Cardiac septum (tissue), 1 donor: ENCODE measurements at regions of chr14 and their contacts with region 1.

Region 1: DNA sequence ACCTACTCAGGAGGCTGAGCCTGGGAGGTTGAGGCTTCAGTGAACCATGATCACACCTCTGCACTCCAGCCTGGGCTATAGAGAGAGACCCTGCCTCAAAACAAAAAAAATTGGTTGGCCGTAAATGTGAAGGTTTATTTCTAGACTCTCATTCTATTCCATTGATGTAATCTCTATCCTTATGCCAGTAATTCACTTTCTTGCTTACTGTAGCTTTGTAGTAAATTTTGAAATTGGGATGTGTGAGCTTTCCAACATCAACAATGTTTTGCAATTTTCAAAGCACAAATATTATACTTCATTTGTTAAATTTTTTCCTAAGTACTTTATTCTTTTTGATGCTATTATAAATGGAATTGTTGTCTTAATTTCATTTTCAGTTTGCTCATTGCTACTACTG is 24.6 kb downstream of the LIN52 start:
- DNase-seq: no peak

Region 2: GRCh38 chr14:74223016-74223415 is 113.6 kb after region 1 on chr14:
- intact Hi-C with region 1: no loop called
- DNase-seq: no peak

Region 3: DNA sequence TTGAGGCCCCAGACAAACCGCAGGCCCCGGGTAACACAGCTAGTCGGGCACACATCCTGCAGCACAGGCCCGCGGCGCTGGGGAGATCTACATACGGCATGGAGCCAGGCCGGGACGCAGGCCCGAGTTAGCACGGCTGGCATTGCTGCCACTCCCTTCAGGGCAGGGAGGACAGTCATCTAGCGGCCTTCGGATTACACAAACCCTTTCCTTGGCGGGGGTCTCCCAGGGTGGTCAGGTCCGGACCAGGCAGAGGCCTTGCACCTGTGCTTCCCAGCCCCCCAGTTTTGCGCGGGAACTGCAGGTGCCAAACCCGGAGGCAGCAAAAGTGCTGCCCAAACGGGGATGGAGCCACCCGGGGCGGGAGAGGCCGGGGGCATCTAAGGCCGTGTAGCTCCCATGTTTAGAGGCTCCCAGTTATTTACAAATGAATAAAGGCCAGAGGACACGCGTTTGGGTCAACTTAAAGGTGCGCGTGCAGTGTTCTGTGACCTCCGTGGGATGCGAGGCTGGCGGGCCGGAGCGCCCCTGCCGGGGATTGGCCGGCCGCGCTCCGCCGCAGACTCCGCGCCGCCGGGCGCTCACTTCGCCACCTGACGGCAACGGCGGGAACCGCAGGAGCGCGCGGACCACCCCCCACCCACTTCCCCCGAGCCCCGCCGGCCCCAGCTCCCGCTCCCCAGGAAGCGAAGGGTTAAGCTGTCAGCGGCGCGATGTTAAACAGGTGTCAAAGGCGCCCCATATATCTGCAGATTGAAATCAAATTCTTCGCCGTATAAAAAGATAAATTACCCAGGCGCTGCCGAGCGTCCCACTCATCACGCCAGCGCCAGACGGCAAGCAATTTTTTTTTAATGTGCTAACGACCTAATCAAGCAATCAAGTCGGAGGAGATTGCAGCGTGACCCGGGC is 148.0 kb after region 1 on chr14:
- intact Hi-C with region 1: loop called (anchors 5 kb)
- DNase-seq: peak; percentile 80

Region 4: DNA sequence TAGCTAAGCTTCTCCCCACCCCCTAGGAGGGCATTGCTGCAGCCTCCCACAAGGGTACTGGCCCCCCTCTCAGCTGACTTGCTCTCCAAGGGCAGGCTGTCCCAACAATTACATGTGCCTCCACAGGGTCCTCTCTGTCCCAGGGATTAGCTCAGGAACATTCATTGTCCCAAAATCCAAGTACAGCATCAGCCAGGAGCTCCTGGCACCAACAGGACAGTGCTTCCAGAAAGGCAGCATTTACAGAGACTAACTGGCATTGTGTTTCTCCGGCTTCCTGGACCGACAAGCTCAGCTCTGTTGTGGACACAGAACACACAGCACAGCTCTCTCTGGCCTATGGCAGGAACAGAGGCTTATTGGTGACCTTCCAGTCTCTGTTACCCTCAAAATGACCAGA is 171.7 kb after region 1 on chr14:
- intact Hi-C with region 1: no loop called
- DNase-seq: no peak